Heart right ventricle (tissue), 16 donors: ENCODE measurements at regions of chr1 and their contacts with region 1.

Region 1: GRCh38 chr1:183039985-183040447 is 16.8 kb downstream of the LAMC1 start:
- DNase-seq: no peak
- ATAC-seq: peak in 6 of 8 donors; percentile 22 to 63 (median 53)
- H3K4me3 ChIP-seq: peak overlapping the region in 1 of 10 donors; percentile 4
- H3K27ac ChIP-seq: peak overlapping the region in 9 of 10 donors; percentile 11 to 79 (median 50)
- H3K4me1 ChIP-seq: peaks cover 11 to 95% (median 83%) of the 10 kb centered on the region in 9 donors
- H3K27me3 ChIP-seq: no peaks in the 10 kb centered on the region
- CTCF ChIP-seq: no peak

Region 2: GRCh38 chr1:183070923-183071618 is 31.1 kb after region 1 on chr1:
- intact Hi-C with region 1: loop called in 1 of 10 experiments (anchors 5 kb)
- DNase-seq: no peak
- ATAC-seq: peak in 6 of 8 donors; percentile 18 to 66 (median 50)
- H3K4me3 ChIP-seq: no peak overlapping the region
- H3K27ac ChIP-seq: peak overlapping the region in 7 of 10 donors; percentile 12 to 54 (median 34)
- H3K4me1 ChIP-seq: peaks cover 9 to 80% (median 66%) of the 10 kb centered on the region in 9 donors
- H3K27me3 ChIP-seq: no peaks in the 10 kb centered on the region
- CTCF ChIP-seq: no peak

Region 3: DNA sequence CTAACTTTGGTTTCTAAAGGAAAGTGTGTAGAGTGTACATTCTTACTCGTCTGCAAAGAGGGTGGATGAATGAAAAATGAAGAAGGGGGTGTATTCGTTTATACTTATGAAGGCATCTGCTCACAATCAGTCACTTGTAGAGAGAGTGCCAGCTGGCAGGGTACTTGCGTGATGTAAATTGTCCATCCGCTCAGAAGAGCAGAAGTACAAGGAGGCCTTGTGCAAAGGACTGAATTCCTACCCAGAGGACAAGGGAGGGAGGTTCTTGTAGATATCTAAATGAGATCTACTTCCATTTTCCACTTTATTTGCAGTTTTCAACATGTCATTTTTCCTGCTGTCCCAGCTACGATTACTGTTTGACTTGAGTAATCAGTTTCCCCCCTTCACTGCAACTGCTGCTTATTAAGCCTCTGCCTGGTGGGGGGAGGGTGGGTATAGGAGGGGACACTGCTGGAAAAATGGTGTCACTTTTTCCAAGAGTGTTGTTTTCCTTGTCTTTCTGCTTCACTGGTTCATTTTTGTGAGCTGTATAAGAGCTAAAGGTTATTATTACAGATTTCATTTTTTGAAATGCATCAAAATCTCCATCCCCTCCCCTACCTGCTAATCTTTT is 50.5 kb after region 1 on chr1:
- intact Hi-C with region 1: loop called in 2 of 10 experiments (anchors 5 kb)
- DNase-seq: peak; percentile 33 to 61
- ATAC-seq: peak in 7 of 8 donors; percentile 77 to 94 (median 87)
- H3K4me3 ChIP-seq: no peak overlapping the region
- H3K27ac ChIP-seq: peak overlapping the region in 9 of 10 donors; percentile 9 to 61 (median 44)
- H3K4me1 ChIP-seq: peaks cover 8 to 93% (median 66%) of the 10 kb centered on the region in 9 donors
- H3K27me3 ChIP-seq: no peaks in the 10 kb centered on the region
- CTCF ChIP-seq: no peak

Region 4: DNA sequence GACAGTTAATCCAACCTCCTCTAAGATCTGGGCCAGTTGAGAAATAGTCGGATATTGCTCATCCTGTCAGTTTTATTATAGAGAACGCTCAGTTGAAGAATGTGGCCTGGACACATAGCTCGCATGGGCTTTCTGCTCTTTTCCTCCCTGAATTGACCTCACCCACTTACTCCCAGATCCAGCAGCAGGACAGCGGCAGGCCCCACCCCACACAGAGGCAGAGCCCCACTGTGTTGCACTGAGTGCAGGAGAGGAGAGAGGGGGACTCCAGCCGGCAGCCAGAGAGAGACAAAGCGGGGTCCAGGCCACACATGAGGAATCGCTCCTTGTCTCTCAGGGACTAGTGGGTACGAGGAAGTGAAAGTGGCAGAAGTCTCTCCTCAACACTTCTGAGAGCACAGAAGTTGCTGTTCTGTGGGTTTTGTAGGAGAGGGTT is 61.8 kb after region 1 on chr1:
- intact Hi-C with region 1: loop called in 1 of 10 experiments (anchors 5 kb)
- DNase-seq: no peak
- ATAC-seq: peak in 4 of 8 donors; percentile 14 to 62 (median 50)
- H3K4me3 ChIP-seq: no peak overlapping the region
- H3K27ac ChIP-seq: peak overlapping the region in 3 of 10 donors; percentile 30 to 49 (median 45)
- H3K4me1 ChIP-seq: peaks cover 0 to 97% (median 84%) of the 10 kb centered on the region in 9 donors
- H3K27me3 ChIP-seq: no peaks in the 10 kb centered on the region
- CTCF ChIP-seq: no peak

Region 5: GRCh38 chr1:183227963-183228649 is 188.1 kb after region 1 on chr1:
- intact Hi-C with region 1: loop called in 1 of 10 experiments (anchors 10 kb)
- DNase-seq: peak; percentile 44 to 45
- ATAC-seq: peak in 6 of 8 donors; percentile 61 to 83 (median 73)
- H3K4me3 ChIP-seq: no peak overlapping the region
- H3K27ac ChIP-seq: no peak overlapping the region
- H3K4me1 ChIP-seq: peaks cover 0 to 10% (median 0%) of the 10 kb centered on the region in 9 donors
- H3K27me3 ChIP-seq: no peaks in the 10 kb centered on the region
- CTCF ChIP-seq: peak; percentile 46 to 86 (median 79)